ENCODE measurements at regions of chr12 and their contacts with region 1.

Region 1: DNA sequence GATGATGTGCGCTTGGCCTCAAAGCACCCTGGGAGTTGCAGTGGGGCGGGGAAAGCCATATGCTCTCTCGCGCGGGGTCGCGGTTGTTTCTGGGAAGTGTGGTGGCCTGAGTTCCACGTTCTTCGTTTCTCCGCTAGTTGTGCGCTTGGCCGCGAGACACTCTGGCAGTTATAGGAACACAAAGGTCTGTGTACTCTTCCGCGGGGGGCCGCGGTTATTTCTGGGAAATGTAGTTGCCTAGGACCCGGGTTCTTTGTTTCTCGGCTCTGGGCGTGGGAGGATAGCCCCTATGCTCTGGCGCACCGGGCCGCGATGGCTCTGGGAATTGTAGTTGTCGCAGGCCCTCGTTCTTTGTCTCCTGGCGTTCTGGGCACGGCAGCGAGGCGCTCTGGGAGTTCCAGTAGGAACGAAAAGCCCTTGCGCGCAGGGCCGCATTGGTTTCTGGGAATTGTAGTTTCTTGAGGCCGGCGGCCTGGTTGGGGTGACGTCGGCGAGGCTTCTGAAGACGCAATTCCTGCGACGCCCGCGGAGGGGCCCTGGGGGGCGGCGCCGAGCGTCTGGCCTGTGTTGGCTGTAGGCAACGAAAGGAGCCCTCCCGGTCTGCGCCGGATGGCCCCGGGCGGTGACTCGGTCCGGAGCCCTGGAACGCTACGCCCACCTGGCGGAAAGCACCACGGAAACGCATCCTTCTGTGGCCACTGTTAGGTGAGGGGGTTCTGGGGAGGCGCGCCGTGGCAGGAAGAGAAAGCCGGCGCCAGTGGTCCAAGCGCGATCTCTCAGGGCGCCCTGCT is at the start of gene ZNF140:
- DNase-seq: peak; percentile 99
- H3K4me3 Mint-ChIP-seq: no peak within 1 kb of the TSS
- H3K27ac Mint-ChIP-seq: no peak within 1 kb of the TSS
- H3K4me1 Mint-ChIP-seq: no peaks in the 10 kb centered on the region
- H3K27me3 Mint-ChIP-seq: no peaks in the 10 kb centered on the region
- CTCF ChIP-seq: no peak
- total RNA-seq, gene ZNF140: 16.0 and 19.6 TPM in 2 replicates

Region 2: GRCh38 chr12:132828706-132829534 is 251.6 kb before region 1 on chr12 and contains the start of gene GOLGA3:
- CTCF ChIA-PET with region 1: interaction called, 3 read pairs
- intact Hi-C with region 1: loop called (anchors 5 kb)
- DNase-seq: peak; percentile 98
- H3K4me3 Mint-ChIP-seq: peak within 1 kb of the TSS; percentile 83
- H3K27ac Mint-ChIP-seq: peak within 1 kb of the TSS; percentile 100
- H3K4me1 Mint-ChIP-seq: peaks cover 17% of the 10 kb centered on the region
- H3K27me3 Mint-ChIP-seq: no peaks in the 10 kb centered on the region
- CTCF ChIP-seq: no peak
- total RNA-seq, gene GOLGA3: 116 and 117 TPM in 2 replicates

Region 3: GRCh38 chr12:132887513-132888351 is 192.8 kb before region 1 on chr12 and contains the start of gene CHFR:
- CTCF ChIA-PET with region 1: no interaction called
- intact Hi-C with region 1: loop called (anchors 1 kb)
- DNase-seq: peak; percentile 97
- H3K4me3 Mint-ChIP-seq: peak within 1 kb of the TSS; percentile 98
- H3K27ac Mint-ChIP-seq: peak within 1 kb of the TSS; percentile 98
- H3K4me1 Mint-ChIP-seq: peaks cover 7% of the 10 kb centered on the region
- H3K27me3 Mint-ChIP-seq: no peaks in the 10 kb centered on the region
- CTCF ChIP-seq: no peak
- total RNA-seq, gene CHFR: 47.2 and 49.5 TPM in 2 replicates

Region 4: DNA sequence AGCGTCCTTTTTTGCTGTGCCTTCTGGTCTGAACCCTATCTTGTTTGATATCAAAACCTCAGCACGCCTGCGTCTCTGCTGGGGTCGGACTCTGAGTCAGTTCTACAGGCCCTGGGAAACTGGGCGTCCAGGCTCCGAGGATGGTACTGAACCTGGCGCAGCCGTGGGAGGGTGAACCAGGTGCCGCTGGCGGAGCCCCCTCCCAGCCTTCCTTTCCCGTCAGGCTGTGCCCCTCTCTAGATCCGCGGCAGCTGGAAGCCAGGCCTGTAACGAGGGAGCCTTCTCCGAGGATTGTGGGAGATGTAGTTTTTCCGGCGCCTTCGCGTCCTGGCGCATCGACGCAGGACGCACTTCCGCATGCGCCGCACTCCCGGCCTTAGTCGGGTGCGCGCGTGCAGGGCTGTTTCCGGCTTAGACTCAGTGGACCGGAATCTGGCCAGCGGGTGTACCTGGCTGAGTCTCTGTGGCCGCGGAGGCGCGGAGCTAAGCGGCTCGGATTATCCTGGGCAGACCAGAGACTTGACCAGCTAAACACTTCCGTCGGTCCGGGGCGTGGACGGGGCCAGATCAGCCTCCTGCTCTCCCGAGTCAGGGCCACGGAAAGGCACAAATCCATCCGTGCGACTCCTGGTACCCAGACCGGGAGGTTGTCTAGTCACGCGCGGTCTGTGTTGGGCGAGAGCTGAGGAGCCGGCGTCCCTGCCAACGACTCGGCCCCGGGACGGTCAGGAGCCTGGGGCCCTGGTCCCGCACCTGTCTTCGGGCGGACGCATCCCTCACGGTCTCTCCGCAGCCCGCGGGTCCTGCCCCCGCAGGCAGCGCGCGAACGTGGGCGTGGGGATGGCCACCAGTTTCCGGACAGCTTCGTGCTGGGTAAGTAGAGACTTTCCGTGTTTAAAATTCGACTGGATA is 94.3 kb before region 1 on chr12 and contains the start of gene ZNF26:
- CTCF ChIA-PET with region 1: interaction called, 3 read pairs
- intact Hi-C with region 1: loop called (anchors 5 kb)
- DNase-seq: peak; percentile 94
- H3K4me3 Mint-ChIP-seq: peak within 1 kb of the TSS; percentile 76
- H3K27ac Mint-ChIP-seq: peak within 1 kb of the TSS; percentile 95
- H3K4me1 Mint-ChIP-seq: peaks cover 26% of the 10 kb centered on the region
- H3K27me3 Mint-ChIP-seq: no peaks in the 10 kb centered on the region
- CTCF ChIP-seq: no peak
- total RNA-seq, gene ZNF26: 25.3 and 28.5 TPM in 2 replicates

Region 5: DNA sequence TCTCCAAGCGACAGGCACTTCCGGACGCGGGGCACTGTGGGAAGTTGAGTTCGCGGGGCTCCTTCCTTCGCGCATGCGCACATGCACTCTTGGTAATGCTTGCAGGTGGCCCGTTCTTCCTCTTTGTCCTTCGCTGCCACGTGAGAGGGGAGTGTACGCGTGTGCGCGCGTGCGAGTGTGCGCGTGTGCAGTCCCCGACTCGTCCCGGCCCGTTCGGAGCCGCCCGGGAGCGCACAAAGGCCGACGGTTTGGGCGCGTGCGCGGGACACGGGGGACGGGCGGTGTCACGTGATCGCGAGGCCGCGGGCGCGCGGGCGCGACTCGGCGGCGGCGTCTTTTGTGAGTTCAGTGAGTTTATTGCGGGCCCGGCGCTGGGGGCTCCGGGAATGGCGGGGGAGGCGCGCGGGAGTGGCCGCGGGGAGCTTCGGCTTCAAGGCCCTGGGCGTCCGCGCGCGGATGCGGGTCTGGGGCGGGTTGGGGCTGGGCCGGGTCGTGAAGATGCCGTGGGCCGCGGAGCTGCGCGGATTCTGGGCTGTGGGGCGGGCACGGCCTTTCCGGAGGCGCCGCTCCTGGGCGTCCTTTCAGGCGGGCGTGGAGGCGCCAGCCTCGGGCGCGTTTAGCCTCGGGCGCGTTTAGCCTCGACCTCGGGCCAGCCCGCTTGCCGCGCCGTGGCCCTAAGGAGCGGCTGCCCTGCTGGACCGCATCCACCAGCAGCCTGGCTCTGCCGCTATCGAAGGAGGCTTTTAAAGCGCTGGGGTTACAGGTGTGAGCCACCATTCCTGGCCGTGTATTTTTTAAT is 43.2 kb before region 1 on chr12 and contains the start of gene ZNF84:
- CTCF ChIA-PET with region 1: no interaction called
- intact Hi-C with region 1: loop called (anchors 2 kb)
- DNase-seq: peak; percentile 98
- H3K4me3 Mint-ChIP-seq: peak within 1 kb of the TSS; percentile 94
- H3K27ac Mint-ChIP-seq: peak within 1 kb of the TSS; percentile 86
- H3K4me1 Mint-ChIP-seq: no peaks in the 10 kb centered on the region
- H3K27me3 Mint-ChIP-seq: no peaks in the 10 kb centered on the region
- CTCF ChIP-seq: no peak
- total RNA-seq, gene ZNF84: 44.5 and 49.8 TPM in 2 replicates

Region 6: DNA sequence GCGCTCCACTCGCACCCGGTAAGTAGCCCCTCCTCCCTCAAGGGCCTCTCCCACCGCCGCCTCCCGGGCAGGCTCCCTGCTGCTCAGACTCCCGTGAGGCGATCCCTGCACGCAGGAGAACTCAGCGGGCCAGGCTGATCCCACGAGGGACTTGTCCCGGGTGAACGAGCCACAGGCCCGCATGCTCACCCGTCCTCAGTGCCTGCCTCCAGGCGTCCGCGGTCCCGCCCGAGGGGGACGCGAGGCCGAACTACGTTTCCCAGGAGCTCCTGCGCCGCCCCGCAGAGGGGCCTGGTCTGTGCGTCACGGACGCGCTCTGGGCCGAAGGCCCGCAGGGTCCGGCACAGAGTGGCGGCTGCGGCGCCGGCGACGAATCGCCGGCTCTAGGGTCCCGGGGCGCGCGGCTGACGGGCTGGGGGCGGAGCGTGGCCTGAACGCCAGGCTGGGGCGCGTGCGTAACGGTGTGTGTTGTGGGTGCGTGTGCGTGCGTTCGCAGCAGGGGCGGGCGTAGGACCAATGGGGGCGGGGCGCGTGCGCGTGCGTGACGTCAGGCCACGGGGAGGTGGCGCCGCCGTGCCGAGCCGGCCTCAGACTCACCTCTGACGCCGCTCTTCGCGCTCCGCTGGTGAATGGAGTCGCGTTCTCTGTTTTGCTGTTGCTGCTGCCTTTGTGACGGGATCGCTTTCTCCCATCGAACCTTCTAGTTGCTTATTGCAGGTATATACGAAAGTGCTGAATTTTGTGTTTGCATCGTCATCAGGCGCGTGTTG is 49.7 kb after region 1 on chr12 and contains the starts of genes ZNF10 and ZNF891:
- CTCF ChIA-PET with region 1: interaction called, 3 read pairs
- intact Hi-C with region 1: loop called (anchors 2 kb)
- DNase-seq: peak; percentile 100
- H3K4me3 Mint-ChIP-seq: peak within 1 kb of the TSS; percentile 100
- H3K27ac Mint-ChIP-seq: peak within 1 kb of the TSS; percentile 95
- H3K4me1 Mint-ChIP-seq: peaks cover 8% of the 10 kb centered on the region
- H3K27me3 Mint-ChIP-seq: no peaks in the 10 kb centered on the region
- CTCF ChIP-seq: no peak
- total RNA-seq, gene ZNF10: 19.1 and 23.0 TPM in 2 replicates
- total RNA-seq, gene ZNF891: 4.2 and 4.8 TPM in 2 replicates

Region 7: DNA sequence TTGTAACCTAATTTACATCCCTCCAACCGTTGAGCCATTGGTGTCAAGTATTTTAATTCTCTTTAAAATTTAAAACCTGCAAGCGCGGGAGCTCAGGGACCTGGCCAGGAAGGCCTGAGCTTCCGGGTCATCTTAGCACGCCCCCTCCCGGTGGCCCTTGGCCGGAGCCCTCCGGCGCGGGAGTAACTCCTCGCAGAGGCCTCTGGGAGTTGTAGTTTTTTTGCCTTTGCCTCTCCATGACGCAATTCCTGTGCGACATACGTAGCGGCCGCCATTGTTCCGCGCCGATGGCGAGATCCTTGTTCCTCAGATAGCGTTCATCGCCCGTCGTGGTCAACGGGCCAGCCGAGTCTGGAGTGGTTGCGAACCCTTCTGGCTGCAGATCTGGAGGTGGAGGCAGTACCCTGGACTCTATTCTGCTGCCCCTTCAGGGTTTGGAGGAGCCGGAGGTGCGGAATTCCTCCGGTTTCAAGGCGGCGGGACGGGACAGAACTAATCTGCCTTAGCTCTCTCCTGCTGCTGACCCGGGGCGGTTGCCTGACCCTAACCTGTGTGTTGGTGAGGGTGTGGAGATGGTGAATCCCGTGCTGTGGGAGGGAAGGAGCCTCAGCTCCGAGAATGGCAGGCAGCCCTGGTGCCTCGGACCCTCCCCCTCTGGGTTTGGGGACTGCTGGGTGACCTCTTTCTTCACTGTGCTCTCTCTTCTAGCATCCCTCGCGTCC is 100.8 kb after region 1 on chr12 and contains the start of gene ZNF268:
- CTCF ChIA-PET with region 1: interaction called, 7 read pairs
- intact Hi-C with region 1: loop called (anchors 1 kb)
- DNase-seq: peak; percentile 97
- H3K4me3 Mint-ChIP-seq: peak within 1 kb of the TSS; percentile 95
- H3K27ac Mint-ChIP-seq: peak within 1 kb of the TSS; percentile 89
- H3K4me1 Mint-ChIP-seq: peaks cover 10% of the 10 kb centered on the region
- H3K27me3 Mint-ChIP-seq: no peaks in the 10 kb centered on the region
- CTCF ChIP-seq: peak; percentile 84
- total RNA-seq, gene ZNF268: 31.6 and 41.4 TPM in 2 replicates

Measured in Calu3 (cell line).